Gastrocnemius medialis (tissue), 4 donors: ENCODE measurements at regions of chr6 and their contacts with region 1.

Region 1: GRCh38 chr6:6998194-6998569 is 109.6 kb upstream of the RREB1 start:
- DNase-seq: peak; percentile 28 to 50
- ATAC-seq: peak; percentile 72 to 74
- H3K4me3 ChIP-seq: no peak overlapping the region
- H3K27ac ChIP-seq: peak overlapping the region; percentile 12 to 64 (median 36)
- H3K4me1 ChIP-seq: peaks cover 11 to 32% of the 10 kb centered on the region in 2 donors
- H3K27me3 ChIP-seq: no peaks in the 10 kb centered on the region
- CTCF ChIP-seq: no peak
- POLR2A ChIP-seq: no peak

Region 2: GRCh38 chr6:7042056-7042653 is 44.0 kb after region 1 on chr6:
- in situ Hi-C with region 1: no loop called
- intact Hi-C with region 1: loop called (anchors 5 kb)
- DNase-seq: no peak
- ATAC-seq: no peak
- H3K4me3 ChIP-seq: no peak overlapping the region
- H3K27ac ChIP-seq: peak overlapping the region; percentile 75 to 88 (median 84)
- H3K4me1 ChIP-seq: peaks cover 17 to 19% of the 10 kb centered on the region in 2 donors
- H3K27me3 ChIP-seq: no peaks in the 10 kb centered on the region
- CTCF ChIP-seq: no peak
- POLR2A ChIP-seq: no peak

Region 3: DNA sequence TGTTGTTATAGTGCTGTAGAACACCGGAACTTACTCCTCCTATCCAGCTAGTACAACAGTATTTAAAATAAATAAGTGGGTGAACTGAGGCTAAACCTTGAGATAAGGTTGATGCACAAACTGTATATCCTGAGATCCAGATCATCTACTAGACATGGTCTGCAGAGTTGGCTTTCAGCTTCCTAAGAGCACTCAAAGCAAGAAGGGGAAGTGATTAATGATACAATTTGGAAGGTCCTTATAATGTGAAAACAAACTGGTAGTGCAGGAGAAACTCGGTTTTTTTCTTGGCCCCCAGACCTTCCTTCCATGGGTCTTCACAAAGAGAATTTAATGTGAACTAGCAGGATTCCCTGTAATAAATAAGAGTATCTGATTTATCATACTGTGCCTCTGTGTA is 82.1 kb after region 1 on chr6:
- in situ Hi-C with region 1: no loop called
- intact Hi-C with region 1: no loop called
- DNase-seq: no peak
- ATAC-seq: no peak
- H3K4me3 ChIP-seq: no peak overlapping the region
- H3K27ac ChIP-seq: no peak overlapping the region
- H3K4me1 ChIP-seq: no peaks in the 10 kb centered on the region
- H3K27me3 ChIP-seq: no peaks in the 10 kb centered on the region
- CTCF ChIP-seq: no peak
- POLR2A ChIP-seq: no peak

Region 4: GRCh38 chr6:7261032-7261841 is 263.1 kb after region 1 on chr6:
- in situ Hi-C with region 1: no loop called
- intact Hi-C with region 1: no loop called
- DNase-seq: peak; percentile 69 to 79
- ATAC-seq: peak; percentile 92 to 94
- H3K4me3 ChIP-seq: peak overlapping the region; percentile 63 to 88 (median 74)
- H3K27ac ChIP-seq: peak overlapping the region; percentile 63 to 71 (median 68)
- H3K4me1 ChIP-seq: peaks cover 7 to 14% of the 10 kb centered on the region in 2 donors
- H3K27me3 ChIP-seq: no peaks in the 10 kb centered on the region
- CTCF ChIP-seq: no peak
- POLR2A ChIP-seq: peak; percentile 42 to 56